MCF 10A (cell line): ENCODE measurements at regions of chr3 and their contacts with region 1.

Region 1: DNA sequence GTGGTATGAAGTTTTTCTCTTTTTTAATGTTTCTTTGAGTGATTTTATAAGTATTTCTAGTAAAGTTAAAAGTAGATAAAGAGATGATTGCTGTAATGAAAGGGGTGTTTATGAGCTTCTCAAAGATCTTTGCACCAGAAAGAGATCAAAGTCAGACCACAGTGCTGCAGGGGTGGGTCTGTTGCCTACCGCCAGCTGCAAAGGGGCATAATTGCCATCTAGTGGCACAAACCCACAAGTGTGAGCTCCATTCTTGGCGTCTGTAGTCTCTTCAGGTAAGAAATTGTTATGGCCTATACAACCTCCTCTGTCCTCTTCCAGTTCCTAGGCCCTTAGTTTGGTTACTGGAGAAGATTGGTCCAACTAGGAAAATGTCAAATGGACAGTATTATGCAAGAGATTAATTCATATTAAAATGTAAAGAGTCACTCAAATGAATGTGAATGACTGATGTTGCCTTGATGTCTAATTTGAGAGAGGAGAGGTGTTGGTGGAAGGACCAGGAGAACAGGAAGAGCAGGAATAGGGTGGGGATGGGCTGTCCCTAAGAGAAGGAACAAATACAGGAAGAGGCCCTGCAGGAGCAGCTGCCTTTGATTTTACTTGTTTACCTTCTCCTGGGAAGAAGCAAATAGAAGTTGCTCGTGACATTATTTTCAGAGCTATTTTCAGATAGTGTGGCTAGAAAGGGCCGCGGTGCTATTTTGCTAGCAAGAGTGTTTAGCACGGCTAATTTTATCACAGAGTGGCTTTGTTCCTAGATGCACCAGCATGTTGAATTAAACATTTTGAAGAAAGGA is 53.0 kb upstream of the GSK3B start:
- DNase-seq: peak; percentile 39
- H3K4me3 Mint-ChIP-seq: no peak overlapping the region
- H3K27ac Mint-ChIP-seq: peak overlapping the region; percentile 49
- H3K4me1 Mint-ChIP-seq: peaks cover 35% of the 10 kb centered on the region
- H3K27me3 Mint-ChIP-seq: no peaks in the 10 kb centered on the region
- CTCF ChIP-seq: peak; percentile 10

Region 2: DNA sequence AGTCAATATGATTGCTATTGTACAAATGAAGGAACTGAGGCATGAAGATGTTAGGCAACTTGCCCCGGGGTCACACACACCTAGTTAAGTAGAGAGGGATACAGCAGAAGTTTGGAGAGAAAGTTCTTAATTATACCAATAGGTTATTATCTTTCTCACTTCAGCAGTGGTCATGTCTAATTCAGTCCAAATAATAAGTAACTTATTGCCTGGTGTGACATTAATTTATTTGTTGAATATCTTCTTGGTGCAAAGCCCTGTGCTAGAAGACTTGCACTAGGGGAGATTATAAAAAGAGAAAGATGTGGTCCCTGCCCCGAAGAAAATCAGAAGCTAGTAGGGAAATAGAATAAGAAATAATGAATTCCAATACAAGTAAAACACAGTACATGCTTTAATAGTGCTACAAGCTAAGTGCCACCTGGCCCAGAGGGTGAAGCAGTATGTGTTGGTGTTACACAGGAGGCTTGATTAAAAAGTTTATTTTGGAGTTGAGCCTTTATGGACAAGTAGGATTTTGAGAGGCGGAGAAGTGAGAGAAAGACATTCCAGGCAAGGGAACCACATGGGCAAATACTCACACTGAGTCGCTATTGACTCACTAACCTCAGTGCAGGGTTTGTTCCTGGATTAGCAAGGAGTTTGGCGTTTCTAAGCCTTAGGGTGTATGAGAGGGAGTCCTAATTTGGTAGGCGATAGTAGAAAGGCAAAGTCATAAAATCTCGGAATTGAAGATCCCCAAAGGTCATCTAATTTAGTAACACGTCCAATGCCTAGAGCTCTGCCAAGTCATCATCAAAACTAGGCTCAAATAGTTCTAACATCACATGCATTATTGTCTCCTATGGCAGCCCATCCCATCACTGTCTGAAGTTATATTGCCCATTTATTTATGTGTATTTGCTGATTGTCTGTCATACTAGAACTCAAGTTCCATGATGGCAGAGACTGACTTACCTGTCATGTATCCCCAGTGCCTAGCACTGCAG is 33.9 kb before region 1 on chr3:
- CTCF ChIA-PET with region 1: interaction called, 5 read pairs
- POLR2A ChIA-PET with region 1: interaction called, 18 read pairs
- intact Hi-C with region 1: no loop called
- DNase-seq: peak; percentile 91
- H3K4me3 Mint-ChIP-seq: no peak overlapping the region
- H3K27ac Mint-ChIP-seq: peak overlapping the region; percentile 73
- H3K4me1 Mint-ChIP-seq: peaks cover 51% of the 10 kb centered on the region
- H3K27me3 Mint-ChIP-seq: no peaks in the 10 kb centered on the region
- CTCF ChIP-seq: no peak

Region 3: DNA sequence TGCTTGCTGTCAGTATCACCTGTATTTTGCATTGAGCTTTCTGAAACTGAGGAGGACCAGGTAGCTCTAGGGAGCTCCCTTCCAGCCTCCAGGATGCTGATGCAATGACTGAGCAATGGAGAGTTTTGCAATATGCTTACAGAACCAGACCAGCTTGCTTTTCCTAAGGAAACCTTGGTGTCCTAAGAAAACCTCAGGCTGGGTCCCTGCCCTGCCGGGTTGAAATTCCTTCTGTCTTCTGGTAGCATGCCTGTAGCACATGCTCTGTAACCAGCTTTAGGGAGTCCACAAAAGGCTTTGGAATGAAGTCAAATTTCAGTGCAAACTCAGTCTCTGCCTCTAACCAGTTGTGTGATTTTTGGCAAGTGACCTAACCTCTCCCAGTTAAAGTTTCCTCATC is 12.8 kb after region 1 on chr3:
- CTCF ChIA-PET with region 1: interaction called, 11 read pairs
- POLR2A ChIA-PET with region 1: interaction called, 49 read pairs
- intact Hi-C with region 1: no loop called
- DNase-seq: peak; percentile 99
- H3K4me3 Mint-ChIP-seq: no peak overlapping the region
- H3K27ac Mint-ChIP-seq: peak overlapping the region; percentile 96
- H3K4me1 Mint-ChIP-seq: peaks cover 32% of the 10 kb centered on the region
- H3K27me3 Mint-ChIP-seq: no peaks in the 10 kb centered on the region
- CTCF ChIP-seq: no peak

Region 4: DNA sequence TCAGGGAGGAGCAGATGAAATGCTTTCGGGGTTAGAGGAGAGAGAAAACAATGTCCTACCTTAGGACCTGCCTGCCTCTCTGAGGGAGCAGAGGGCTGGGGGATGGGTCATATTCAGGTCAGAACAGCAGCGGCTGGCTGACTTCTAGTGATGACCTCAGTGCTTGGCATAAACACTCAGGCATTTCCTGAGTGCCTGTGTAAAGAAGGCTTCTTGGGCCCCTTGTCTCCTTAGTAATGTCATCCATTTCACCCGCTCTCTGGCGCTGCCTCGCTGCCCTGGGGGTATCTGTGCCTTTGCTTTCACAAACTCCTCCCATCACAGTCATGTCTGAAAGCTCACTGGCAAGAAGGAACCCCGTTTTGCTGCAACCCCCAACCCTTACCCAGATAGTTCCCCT is 29.9 kb after region 1 on chr3:
- CTCF ChIA-PET with region 1: interaction called, 10 read pairs
- POLR2A ChIA-PET with region 1: interaction called, 21 read pairs
- intact Hi-C with region 1: no loop called
- DNase-seq: peak; percentile 93
- H3K4me3 Mint-ChIP-seq: peak overlapping the region; percentile 65
- H3K27ac Mint-ChIP-seq: peak overlapping the region; percentile 96
- H3K4me1 Mint-ChIP-seq: peaks cover 34% of the 10 kb centered on the region
- H3K27me3 Mint-ChIP-seq: no peaks in the 10 kb centered on the region
- CTCF ChIP-seq: no peak

Region 5: GRCh38 chr3:120487191-120487650 is 339.9 kb after region 1 on chr3:
- CTCF ChIA-PET with region 1: no interaction called
- POLR2A ChIA-PET with region 1: no interaction called
- intact Hi-C with region 1: no loop called
- DNase-seq: no peak
- H3K4me3 Mint-ChIP-seq: peak overlapping the region; percentile 32
- H3K27ac Mint-ChIP-seq: peak overlapping the region; percentile 29
- H3K4me1 Mint-ChIP-seq: peaks cover 12% of the 10 kb centered on the region
- H3K27me3 Mint-ChIP-seq: no peaks in the 10 kb centered on the region
- CTCF ChIP-seq: no peak